WTC11 (cell line): ENCODE measurements at regions of chr16 and their contacts with region 1.

Region 1: GRCh38 chr16:31142109-31143010 is 6.8 kb upstream of the PRSS8 start:
- DNase-seq: peak; percentile 100
- ATAC-seq: peak; percentile 91
- H3K4me3 Mint-ChIP-seq: peak overlapping the region; percentile 63
- H3K27ac Mint-ChIP-seq: peak overlapping the region; percentile 91
- H3K4me1 Mint-ChIP-seq: peaks cover 33% of the 10 kb centered on the region
- H3K27me3 Mint-ChIP-seq: peaks cover 41% of the 10 kb centered on the region
- CTCF ChIP-seq: peak; percentile 94

Region 2: GRCh38 chr16:30953511-30954124 is 188.7 kb before region 1 on chr16:
- CTCF ChIA-PET with region 1: interaction called, 17 read pairs
- POLR2A ChIA-PET with region 1: no interaction called
- DNase-seq: peak; percentile 91
- ATAC-seq: peak; percentile 66
- H3K4me3 Mint-ChIP-seq: no peak overlapping the region
- H3K27ac Mint-ChIP-seq: no peak overlapping the region
- H3K4me1 Mint-ChIP-seq: peaks cover 19% of the 10 kb centered on the region
- H3K27me3 Mint-ChIP-seq: peaks cover 3% of the 10 kb centered on the region; the same call in 1 of the 2 replicates
- CTCF ChIP-seq: peak; percentile 64; the same call in 1 of the 2 replicates

Region 3: DNA sequence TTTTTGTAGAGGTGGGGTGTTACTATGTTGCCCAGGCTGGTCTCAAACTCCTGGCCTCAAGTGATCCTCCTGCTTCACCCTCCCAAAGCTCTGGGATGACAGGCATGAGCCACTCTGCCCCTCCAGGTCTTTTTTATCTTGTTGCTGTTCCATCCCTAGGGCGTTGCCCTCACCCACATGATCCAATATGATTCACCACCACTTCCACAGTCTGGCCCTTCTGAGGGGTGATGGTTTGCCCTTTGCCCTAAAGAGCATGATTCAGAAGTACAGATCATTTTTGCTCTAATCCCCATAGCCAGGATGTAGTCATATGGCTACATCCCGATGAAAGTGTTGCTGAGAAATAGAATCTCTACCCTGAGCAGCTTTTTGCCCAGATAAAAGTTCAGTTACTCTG is 90.2 kb before region 1 on chr16:
- CTCF ChIA-PET with region 1: interaction called, 10 read pairs
- POLR2A ChIA-PET with region 1: no interaction called
- DNase-seq: no peak
- ATAC-seq: no peak
- H3K4me3 Mint-ChIP-seq: no peak overlapping the region
- H3K27ac Mint-ChIP-seq: no peak overlapping the region
- H3K4me1 Mint-ChIP-seq: peaks cover 15% of the 10 kb centered on the region
- H3K27me3 Mint-ChIP-seq: peaks cover 15% of the 10 kb centered on the region
- CTCF ChIP-seq: no peak

Region 4: DNA sequence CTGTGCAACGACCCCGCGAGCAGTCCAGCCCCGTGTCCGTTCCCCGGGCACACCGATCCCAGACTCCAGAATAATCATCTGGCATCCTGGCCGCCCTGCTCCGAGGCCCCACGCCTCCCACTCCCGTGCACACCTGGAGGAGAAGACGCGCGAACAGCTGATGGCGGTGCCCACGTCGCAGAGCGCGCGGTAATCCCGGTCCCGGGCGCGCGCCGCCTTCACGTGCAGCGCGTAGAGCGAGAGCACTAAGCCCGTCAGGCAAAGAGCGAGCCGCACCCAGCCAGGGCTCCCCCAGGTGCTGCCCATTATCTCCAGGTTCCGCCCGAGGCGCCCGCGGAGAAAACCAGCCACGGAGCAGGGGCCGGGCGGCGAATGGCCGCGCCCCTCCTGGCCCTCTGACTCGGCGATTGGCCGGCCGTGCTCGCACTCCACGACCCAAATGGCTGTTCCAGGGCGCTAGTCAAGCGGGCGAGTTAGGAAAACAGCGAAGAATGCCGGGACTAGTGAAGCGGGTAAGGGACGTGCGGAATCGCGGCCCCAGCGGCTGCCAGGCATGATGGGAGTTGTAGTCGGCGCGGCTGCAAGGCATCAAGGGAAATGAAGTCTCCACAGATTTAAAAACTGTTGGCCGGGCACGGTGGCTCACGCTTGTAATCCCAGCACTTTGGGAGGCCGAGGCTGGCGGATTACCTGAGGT is 47.8 kb before region 1 on chr16 and contains the start of gene VKORC1:
- CTCF ChIA-PET with region 1: interaction called, 24 read pairs
- POLR2A ChIA-PET with region 1: interaction called, 3 read pairs
- DNase-seq: peak; percentile 95
- ATAC-seq: peak; percentile 94
- H3K4me3 Mint-ChIP-seq: peak within 1 kb of the TSS; percentile 87
- H3K27ac Mint-ChIP-seq: peak within 1 kb of the TSS; percentile 84
- H3K4me1 Mint-ChIP-seq: peaks cover 14% of the 10 kb centered on the region
- H3K27me3 Mint-ChIP-seq: peaks cover 2% of the 10 kb centered on the region; the same call in 1 of the 2 replicates
- CTCF ChIP-seq: no peak
- total RNA-seq, gene VKORC1: 85.7 to 114 TPM (median 110 TPM) in 3 replicates

Region 5: GRCh38 chr16:31128711-31129567 is 13.4 kb before region 1 on chr16:
- CTCF ChIA-PET with region 1: interaction called, 25 read pairs
- POLR2A ChIA-PET with region 1: interaction called, 20 read pairs
- DNase-seq: no peak
- ATAC-seq: no peak
- H3K4me3 Mint-ChIP-seq: no peak overlapping the region
- H3K27ac Mint-ChIP-seq: 0 out of 2 replicates have a peak overlapping the region, but pooled peaks have one; percentile 66
- H3K4me1 Mint-ChIP-seq: peaks cover 36% of the 10 kb centered on the region
- H3K27me3 Mint-ChIP-seq: no peaks in the 10 kb centered on the region
- CTCF ChIP-seq: no peak

Region 6: DNA sequence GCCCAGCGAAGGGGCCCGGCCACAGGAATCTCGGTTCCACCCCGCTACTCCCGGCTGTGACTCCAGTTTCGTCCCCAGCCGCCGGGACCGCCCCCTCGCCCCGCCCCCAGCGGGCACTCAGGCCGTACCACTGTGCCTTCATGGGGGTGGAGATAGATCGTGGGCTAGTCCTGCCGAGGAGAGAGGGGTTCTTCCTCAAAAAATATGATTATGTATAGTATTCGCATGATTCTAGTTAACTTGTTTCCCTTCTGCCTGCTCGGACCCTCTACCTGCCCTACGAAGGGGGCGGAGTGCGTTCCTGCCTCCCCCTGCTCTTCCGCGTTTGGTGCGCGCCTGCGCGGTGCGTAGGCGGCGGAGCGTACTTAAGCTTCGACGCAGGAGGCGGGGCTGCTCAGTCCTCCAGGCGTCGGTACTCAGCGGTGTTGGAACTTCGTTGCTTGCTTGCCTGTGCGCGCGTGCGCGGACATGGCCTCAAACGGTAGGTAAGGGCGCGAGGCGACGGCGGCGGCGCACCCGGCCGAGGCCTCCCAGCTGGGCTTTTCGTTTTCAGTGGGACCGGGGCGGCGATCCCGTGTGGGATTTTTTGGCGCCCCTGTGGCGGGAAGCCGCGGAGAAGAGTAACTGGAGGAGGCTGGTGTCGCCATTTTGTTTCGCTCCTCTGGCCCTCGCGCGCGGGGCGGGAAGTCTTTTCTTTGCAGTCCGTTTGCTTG is 37.5 kb after region 1 on chr16 and contains the start of gene FUS:
- CTCF ChIA-PET with region 1: interaction called, 18 read pairs
- POLR2A ChIA-PET with region 1: interaction called, 24 read pairs
- DNase-seq: peak; percentile 86
- ATAC-seq: peak; percentile 60
- H3K4me3 Mint-ChIP-seq: peak within 1 kb of the TSS; percentile 95
- H3K27ac Mint-ChIP-seq: peak within 1 kb of the TSS; percentile 100
- H3K4me1 Mint-ChIP-seq: peaks cover 31% of the 10 kb centered on the region
- H3K27me3 Mint-ChIP-seq: no peaks in the 10 kb centered on the region
- CTCF ChIP-seq: no peak
- total RNA-seq, gene FUS: 631 to 770 TPM (median 679 TPM) in 3 replicates

Region 7: DNA sequence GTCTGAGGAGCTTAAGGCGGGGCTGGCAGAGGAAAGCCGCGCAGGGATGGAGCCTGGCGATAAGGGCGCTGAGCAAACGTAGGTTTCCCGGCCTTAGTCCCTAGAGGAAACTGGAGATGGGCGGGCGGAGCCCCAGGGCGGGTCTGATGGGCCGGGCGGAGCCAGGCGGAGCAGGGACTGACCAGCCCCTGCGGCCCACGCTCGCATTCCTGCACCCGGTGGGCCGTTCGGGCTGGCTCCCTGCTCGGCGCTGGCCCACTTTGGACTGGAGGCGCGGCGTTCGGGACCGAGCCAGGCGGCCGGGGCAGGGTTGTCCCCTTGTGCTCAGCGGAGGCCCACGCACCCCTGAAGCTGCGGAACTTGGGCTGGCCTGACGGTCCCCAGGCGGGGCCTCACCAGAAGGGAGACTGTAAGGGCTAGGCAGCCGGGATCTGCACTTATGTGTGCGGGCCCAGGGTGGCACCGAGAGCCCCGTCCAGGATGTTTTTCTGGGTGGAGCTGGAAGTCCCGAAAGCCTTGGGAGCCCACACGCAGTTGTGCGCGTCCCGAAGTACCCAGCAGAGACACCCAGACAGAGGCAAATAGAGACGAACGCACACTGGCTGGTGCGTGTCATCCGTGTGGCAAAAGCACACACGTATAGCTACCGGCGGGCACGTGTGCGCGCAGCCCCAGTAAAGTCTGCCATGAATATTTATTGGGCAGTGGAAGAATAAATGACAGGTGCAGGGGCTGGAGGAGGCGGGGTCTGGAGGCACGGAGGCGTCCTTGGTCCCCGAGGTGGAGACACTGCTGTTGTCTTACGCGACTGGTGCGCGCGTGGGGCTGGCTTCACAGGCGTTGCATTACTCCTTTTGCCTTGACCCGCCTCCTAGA is 73.2 kb after region 1 on chr16:
- CTCF ChIA-PET with region 1: interaction called, 31 read pairs
- POLR2A ChIA-PET with region 1: interaction called, 3 read pairs
- DNase-seq: peak; percentile 89
- ATAC-seq: peak; percentile 85
- H3K4me3 Mint-ChIP-seq: peak overlapping the region; percentile 77
- H3K27ac Mint-ChIP-seq: no peak overlapping the region
- H3K4me1 Mint-ChIP-seq: peaks cover 30% of the 10 kb centered on the region
- H3K27me3 Mint-ChIP-seq: peaks cover 57% of the 10 kb centered on the region
- CTCF ChIP-seq: no peak

Region 8: GRCh38 chr16:31421587-31421986 is 279.2 kb after region 1 on chr16:
- CTCF ChIA-PET with region 1: no interaction called
- POLR2A ChIA-PET with region 1: no interaction called
- DNase-seq: no peak
- ATAC-seq: no peak
- H3K4me3 Mint-ChIP-seq: no peak overlapping the region
- H3K27ac Mint-ChIP-seq: no peak overlapping the region
- H3K4me1 Mint-ChIP-seq: no peaks in the 10 kb centered on the region
- H3K27me3 Mint-ChIP-seq: peaks cover 35% of the 10 kb centered on the region
- CTCF ChIP-seq: no peak